Thyroid gland (tissue), 4 donors: ENCODE measurements at regions of chr10 and their contacts with region 1.

Region 1: DNA sequence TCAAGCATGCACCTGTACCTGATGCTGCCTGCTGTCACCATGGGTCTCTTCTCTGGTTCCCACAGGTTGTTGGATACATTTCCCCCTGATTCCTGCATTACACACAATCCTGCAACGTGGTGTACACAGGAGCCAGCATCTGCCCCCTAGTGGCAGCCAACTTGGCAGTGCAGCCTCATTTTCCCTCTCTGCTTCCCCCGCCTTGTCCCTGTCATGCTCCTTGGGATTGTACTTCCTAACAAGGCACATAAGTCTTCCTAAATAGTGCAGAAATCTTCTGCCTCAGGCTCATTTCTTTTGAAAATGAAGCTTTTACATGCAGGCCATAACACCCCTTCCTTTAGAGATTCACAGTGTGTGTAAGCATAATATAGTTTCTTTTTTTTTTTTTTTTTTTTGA is 387.5 kb downstream of the CCSER2 start:
- DNase-seq: peak; percentile 56 to 60
- H3K4me3 ChIP-seq: no peak overlapping the region
- H3K27ac ChIP-seq: no peak overlapping the region
- H3K4me1 ChIP-seq: no peaks in the 10 kb centered on the region
- H3K27me3 ChIP-seq: no peaks in the 10 kb centered on the region
- CTCF ChIP-seq: peak; percentile 43 to 78 (median 63)
- POLR2A ChIP-seq: no peak

Region 2: DNA sequence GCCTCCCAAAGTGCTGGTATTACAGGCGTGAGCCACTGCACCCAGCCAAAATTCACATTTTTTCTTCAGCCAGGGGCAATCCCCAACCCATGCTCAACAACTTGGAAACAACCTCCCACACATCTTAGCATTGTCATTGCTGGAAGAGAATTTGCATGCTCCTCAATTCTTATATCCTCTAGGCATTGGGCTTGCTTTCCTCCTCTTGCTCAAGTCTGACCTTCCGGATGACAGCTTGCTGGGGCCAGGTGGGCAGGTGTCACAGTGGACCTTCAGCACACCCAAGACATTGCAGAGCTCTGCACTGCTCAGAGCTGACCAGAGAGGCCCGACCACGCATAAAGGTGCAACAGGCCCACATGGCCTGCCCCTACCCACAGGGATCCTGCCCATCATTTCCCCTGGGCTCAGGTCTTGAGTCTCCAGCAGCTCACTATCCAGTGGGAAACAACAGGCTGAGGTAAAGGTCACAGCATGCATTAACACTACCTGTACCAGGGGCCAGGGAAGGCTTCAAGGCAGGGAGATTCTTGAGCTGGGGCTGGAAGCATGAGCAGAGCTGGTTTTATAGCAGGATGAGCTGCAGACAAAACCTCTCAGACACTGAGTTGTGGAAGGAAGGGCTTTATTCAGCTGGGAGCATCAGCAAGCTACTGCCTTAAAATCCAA is 549.2 kb before region 1 on chr10:
- intact Hi-C with region 1: no loop called
- DNase-seq: no peak
- H3K4me3 ChIP-seq: no peak overlapping the region
- H3K27ac ChIP-seq: no peak overlapping the region
- H3K4me1 ChIP-seq: no peaks in the 10 kb centered on the region
- H3K27me3 ChIP-seq: no peaks in the 10 kb centered on the region
- CTCF ChIP-seq: no peak
- POLR2A ChIP-seq: no peak

Region 3: DNA sequence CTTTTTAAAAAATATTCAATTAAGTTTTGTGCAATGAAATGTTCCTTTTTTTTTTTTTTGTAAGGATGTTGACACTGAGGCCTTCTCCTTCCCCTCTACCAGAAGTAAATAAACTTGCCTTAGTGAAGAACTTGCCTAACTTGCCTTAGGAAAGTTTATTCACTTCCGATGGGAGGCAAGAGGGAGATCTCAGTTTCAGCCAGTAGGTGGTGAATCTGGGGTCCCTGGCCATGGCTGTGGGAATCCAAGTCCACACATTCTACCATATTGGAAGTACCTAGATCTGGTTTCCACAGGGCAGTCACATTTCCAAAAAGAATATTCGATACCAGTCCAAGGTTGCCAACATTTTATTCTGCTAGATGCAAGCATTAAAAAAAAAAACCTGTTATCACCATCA is 116.7 kb before region 1 on chr10:
- intact Hi-C with region 1: no loop called
- DNase-seq: no peak
- H3K4me3 ChIP-seq: no peak overlapping the region
- H3K27ac ChIP-seq: no peak overlapping the region
- H3K4me1 ChIP-seq: no peaks in the 10 kb centered on the region
- H3K27me3 ChIP-seq: no peaks in the 10 kb centered on the region
- CTCF ChIP-seq: no peak
- POLR2A ChIP-seq: no peak

Region 4: DNA sequence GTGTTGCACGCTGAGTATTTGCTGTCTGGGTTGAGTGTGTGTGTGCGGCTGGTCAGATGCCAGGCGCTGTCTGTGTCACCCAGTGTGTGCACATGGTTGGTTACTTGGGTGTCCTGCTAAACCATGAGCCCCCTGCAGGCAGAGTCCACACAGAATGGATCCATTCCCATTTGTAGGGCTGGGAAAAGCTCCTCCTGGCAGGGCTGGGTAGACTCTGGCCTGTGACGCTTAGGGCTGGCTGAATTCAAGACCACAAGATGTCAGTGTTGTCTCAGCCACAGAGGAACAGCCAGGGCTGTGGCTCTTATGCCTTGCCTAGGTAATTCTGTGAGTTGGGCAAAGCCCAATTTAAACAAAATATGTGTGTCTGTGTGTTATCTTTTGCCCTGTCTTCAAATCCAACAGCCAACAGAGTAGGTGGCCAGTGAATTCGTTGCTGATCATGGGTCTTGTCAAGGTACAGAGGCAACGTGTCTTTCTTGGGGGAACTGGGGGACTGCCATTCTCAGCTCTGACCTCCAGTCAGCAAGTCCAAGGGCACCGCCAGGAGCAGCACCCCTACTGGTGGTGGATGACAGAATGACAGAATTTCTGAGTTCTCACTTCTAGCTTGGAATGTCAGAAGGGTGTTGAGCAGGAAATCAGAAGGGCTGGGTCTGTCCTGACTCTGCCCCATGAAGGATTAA is 102.4 kb before region 1 on chr10:
- intact Hi-C with region 1: loop called (anchors 10 kb)
- DNase-seq: peak; percentile 64 to 74
- H3K4me3 ChIP-seq: no peak overlapping the region
- H3K27ac ChIP-seq: peak overlapping the region in 1 of 3 donors; percentile 5
- H3K4me1 ChIP-seq: no peaks in the 10 kb centered on the region
- H3K27me3 ChIP-seq: no peaks in the 10 kb centered on the region
- CTCF ChIP-seq: peak in 5 of 6 experiments; percentile 38 to 82 (median 66)
- POLR2A ChIP-seq: no peak